Endothelial cell of umbilical vein (primary cell): ENCODE measurements at regions of chr4 and their contacts with region 1.

Region 1: DNA sequence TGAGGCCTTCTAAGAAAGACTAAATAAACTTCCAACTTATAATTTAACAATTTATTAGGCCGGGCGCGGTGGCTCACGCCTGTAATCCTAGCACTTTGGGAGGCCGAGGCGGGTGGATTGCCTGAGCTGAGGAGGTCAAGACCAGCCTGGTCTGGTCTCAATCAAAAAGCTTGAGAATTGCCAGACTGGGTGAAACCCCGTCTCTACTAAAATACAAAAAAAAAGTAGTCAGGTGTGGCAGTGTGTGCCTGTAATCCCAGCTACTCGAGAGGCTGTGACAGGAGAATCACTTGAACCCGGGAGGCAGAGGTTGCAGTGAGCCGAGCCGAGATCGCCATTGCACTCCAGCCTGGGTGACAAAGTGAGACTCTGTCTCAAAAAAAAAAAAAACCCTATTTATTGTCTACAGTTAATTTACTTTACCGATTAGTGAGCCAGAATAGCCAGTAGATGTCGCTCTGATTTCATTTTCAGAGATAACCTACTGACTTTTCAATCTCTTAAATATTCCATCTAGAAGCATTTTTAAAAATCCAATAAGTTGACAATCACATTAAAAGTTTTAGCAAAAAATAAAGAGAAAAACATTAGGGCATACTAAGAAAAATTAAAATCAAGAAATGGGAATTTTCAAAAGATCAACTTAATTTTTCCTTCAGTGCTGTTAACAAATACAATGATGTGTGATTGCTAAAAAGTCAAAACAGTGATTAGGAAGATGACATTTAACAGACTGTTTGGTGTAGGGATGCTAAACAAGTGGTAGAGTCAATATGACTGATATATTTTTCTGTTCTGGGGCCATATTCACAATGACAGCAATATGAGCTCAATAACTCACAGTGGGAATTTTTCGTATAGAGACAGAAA is 4.3 kb upstream of the SHROOM3 start:
- DNase-seq: peak; percentile 61
- H3K4me3 ChIP-seq: no peak overlapping the region
- H3K27ac ChIP-seq: no peak overlapping the region
- H3K4me1 ChIP-seq: no peaks in the 10 kb centered on the region
- H3K27me3 ChIP-seq: peaks cover 14 to 26% of the 10 kb centered on the region in 2 experiments
- CTCF ChIP-seq: peak; percentile 39
- POLR2A ChIP-seq: no peak

Region 2: GRCh38 chr4:77358315-77358928 is 927.7 kb after region 1 on chr4:
- CTCF ChIA-PET with region 1: interaction called, 22 read pairs
- POLR2A ChIA-PET with region 1: no interaction called
- dilution Hi-C with region 1: no loop called
- intact Hi-C with region 1: no loop called
- DNase-seq: peak; percentile 41
- H3K4me3 ChIP-seq: no peak overlapping the region
- H3K27ac ChIP-seq: no peak overlapping the region
- H3K4me1 ChIP-seq: no peaks in the 10 kb centered on the region
- H3K27me3 ChIP-seq: peaks cover 5 to 6% of the 10 kb centered on the region in 2 experiments
- CTCF ChIP-seq: peak; percentile 54 to 68
- POLR2A ChIP-seq: no peak